ENCODE measurements at regions of chr2 and their contacts with region 1.

Region 1: GRCh38 chr2:86298411-86299379 is 38.7 kb downstream of the REEP1 start:
- DNase-seq: no peak
- ATAC-seq: peak; percentile 52

Region 2: DNA sequence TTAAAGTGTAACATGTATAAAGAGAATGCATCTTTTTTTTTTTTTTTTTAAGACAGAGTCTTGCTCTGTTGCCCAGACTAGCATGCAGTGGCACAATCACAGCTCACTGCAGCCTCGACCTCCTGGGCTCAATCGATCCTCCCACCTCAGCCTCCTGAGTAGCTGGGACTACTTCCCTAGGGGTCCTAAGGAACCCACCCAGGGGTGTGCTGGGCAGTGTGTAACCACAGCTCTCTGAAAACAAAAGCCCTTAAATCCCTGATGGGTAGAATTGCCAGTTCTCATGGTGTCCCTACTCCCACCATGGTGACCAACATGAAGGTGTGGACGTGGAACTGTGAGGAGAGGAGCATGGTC is 304.3 kb before region 1 on chr2:
- intact Hi-C with region 1: no loop called
- DNase-seq: no peak
- ATAC-seq: no peak

Region 3: GRCh38 chr2:86105252-86105968 is 193.3 kb before region 1 on chr2 and contains the start of gene POLR1A:
- intact Hi-C with region 1: no loop called
- DNase-seq: peak; percentile 92
- ATAC-seq: peak; percentile 96
- total RNA-seq, gene POLR1A: 12.8 TPM

Region 4: GRCh38 chr2:86337244-86337836 is 38.6 kb after region 1 on chr2 and contains the start of gene REEP1:
- intact Hi-C with region 1: loop called (anchors 5 kb)
- DNase-seq: peak; percentile 68
- ATAC-seq: peak; percentile 82
- total RNA-seq, gene REEP1: 23.6 TPM

Region 5: DNA sequence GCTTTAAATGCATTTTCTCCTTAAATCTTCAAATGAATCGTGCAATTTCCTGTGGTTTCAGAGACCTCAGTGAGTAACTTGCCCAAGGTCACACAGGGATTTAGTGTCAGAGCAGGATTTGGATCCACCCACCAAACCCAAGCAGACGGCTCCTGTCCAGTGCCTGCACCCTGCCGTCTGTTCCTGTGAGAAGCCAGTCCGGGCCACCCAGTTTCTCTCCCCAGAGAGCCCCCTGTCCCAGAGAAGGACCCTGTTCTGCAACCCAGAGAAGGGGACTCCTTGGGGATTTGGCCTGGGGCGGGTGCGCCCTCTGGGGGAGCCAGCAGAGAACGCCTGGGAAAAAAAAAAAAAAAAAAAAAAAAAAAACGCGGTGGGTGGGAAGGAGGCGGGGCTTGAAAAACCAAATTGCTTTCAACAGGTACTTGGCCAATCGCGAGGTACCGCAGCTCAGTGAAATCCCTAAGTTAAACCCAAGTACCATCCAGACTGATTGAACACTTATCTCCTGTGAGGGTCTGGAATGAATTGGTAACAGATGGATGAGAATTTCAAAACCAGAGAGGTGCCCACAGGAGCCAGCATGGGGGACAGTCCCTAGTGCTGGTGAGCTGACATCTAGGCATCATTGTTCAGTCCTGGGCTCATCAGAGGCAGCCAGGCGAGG is 69.6 kb after region 1 on chr2:
- intact Hi-C with region 1: loop called (anchors 5 kb)
- DNase-seq: no peak
- ATAC-seq: peak; percentile 52

Measured in Right ventricle myocardium inferior (tissue), 1 donor.